ENCODE measurements at regions of chr5 and their contacts with region 1.

Region 1: GRCh38 chr5:55936100-55936693 is 58.6 kb downstream of the IL6ST start:
- DNase-seq: no peak
- ATAC-seq: peak; percentile 81
- H3K4me3 ChIP-seq: no peak overlapping the region
- H3K27ac ChIP-seq: no peak overlapping the region
- H3K4me1 ChIP-seq: no peaks in the 10 kb centered on the region
- H3K27me3 ChIP-seq: no peaks in the 10 kb centered on the region
- CTCF ChIP-seq: peak; percentile 83 to 94 (median 87)
- EP300 ChIP-seq: no peak
- POLR2A ChIP-seq: no peak
- RAD21 ChIP-seq: peak; percentile 92

Region 2: GRCh38 chr5:55885359-55885758 is 50.8 kb before region 1 on chr5:
- CTCF ChIA-PET with region 1: no interaction called
- POLR2A ChIA-PET with region 1: no interaction called
- RAD21 ChIA-PET with region 1: no interaction called
- SMC1A ChIA-PET with region 1: no interaction called
- in situ Hi-C with region 1: no loop called
- intact Hi-C with region 1: no loop called
- DNase-seq: no peak
- ATAC-seq: no peak
- H3K4me3 ChIP-seq: no peak overlapping the region
- H3K27ac ChIP-seq: no peak overlapping the region
- H3K4me1 ChIP-seq: no peaks in the 10 kb centered on the region
- H3K27me3 ChIP-seq: no peaks in the 10 kb centered on the region
- CTCF ChIP-seq: no peak
- EP300 ChIP-seq: no peak
- POLR2A ChIP-seq: no peak
- RAD21 ChIP-seq: no peak

Region 3: GRCh38 chr5:55913466-55914413 is 22.5 kb before region 1 on chr5:
- CTCF ChIA-PET with region 1: interaction called, 49 read pairs
- POLR2A ChIA-PET with region 1: no interaction called
- RAD21 ChIA-PET with region 1: interaction called, 15 read pairs
- SMC1A ChIA-PET with region 1: interaction called, 26 read pairs
- in situ Hi-C with region 1: no loop called
- intact Hi-C with region 1: no loop called
- DNase-seq: no peak
- ATAC-seq: peak; percentile 95
- H3K4me3 ChIP-seq: no peak overlapping the region
- H3K27ac ChIP-seq: no peak overlapping the region
- H3K4me1 ChIP-seq: no peaks in the 10 kb centered on the region
- H3K27me3 ChIP-seq: 0 out of 4 replicates have a peak, but pooled peaks cover 0 to 2% of the 10 kb centered on the region in 2 experiments
- CTCF ChIP-seq: no peak
- EP300 ChIP-seq: peak in 1 of 2 experiments; percentile 63; a peak in 3 of 4 replicates
- POLR2A ChIP-seq: no peak
- RAD21 ChIP-seq: no peak

Region 4: DNA sequence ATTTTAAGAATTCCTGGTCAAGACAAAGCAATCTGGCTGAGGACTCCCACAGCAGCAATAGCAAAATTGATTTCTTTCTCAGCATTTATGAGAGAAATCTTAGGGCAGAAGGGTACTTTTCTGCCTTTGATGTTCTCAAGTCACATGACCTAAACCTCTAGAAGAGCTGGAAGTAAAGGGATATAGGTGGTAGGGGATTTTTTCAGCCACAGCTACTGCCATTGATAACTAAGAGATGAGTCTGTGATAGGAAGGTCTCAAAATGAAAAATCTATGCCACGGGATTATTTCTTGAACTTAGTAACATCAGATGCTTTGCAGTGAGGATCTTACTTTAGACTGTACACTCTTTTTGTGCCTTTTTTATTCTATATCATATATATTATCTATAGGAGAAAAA is 23.0 kb after region 1 on chr5:
- CTCF ChIA-PET with region 1: interaction called, 30 read pairs
- POLR2A ChIA-PET with region 1: interaction called, 3 read pairs
- RAD21 ChIA-PET with region 1: interaction called, 6 read pairs
- SMC1A ChIA-PET with region 1: interaction called, 16 read pairs
- in situ Hi-C with region 1: no loop called
- intact Hi-C with region 1: no loop called
- DNase-seq: no peak
- ATAC-seq: peak; percentile 26
- H3K4me3 ChIP-seq: no peak overlapping the region
- H3K27ac ChIP-seq: no peak overlapping the region
- H3K4me1 ChIP-seq: no peaks in the 10 kb centered on the region
- H3K27me3 ChIP-seq: no peaks in the 10 kb centered on the region
- CTCF ChIP-seq: no peak
- EP300 ChIP-seq: no peak
- POLR2A ChIP-seq: no peak
- RAD21 ChIP-seq: no peak

Region 5: GRCh38 chr5:55982957-55983381 is 46.8 kb after region 1 on chr5:
- CTCF ChIA-PET with region 1: interaction called, 19 read pairs
- POLR2A ChIA-PET with region 1: interaction called, 3 read pairs
- RAD21 ChIA-PET with region 1: interaction called, 15 read pairs
- SMC1A ChIA-PET with region 1: interaction called, 15 read pairs
- in situ Hi-C with region 1: no loop called
- intact Hi-C with region 1: no loop called
- DNase-seq: no peak
- ATAC-seq: peak; percentile 28
- H3K4me3 ChIP-seq: no peak overlapping the region
- H3K27ac ChIP-seq: no peak overlapping the region
- H3K4me1 ChIP-seq: peaks cover 1% of the 10 kb centered on the region
- H3K27me3 ChIP-seq: no peaks in the 10 kb centered on the region
- CTCF ChIP-seq: peak in 2 of 3 experiments; percentile 14 to 50; a peak in 3 of 6 replicates
- EP300 ChIP-seq: no peak
- POLR2A ChIP-seq: no peak
- RAD21 ChIP-seq: peak; percentile 38

Region 6: GRCh38 chr5:56080375-56081052 is 144.3 kb after region 1 on chr5:
- CTCF ChIA-PET with region 1: interaction called, 11 read pairs
- POLR2A ChIA-PET with region 1: no interaction called
- RAD21 ChIA-PET with region 1: interaction called, 8 read pairs
- SMC1A ChIA-PET with region 1: interaction called, 6 read pairs
- in situ Hi-C with region 1: no loop called
- intact Hi-C with region 1: no loop called
- DNase-seq: peak; percentile 98
- ATAC-seq: peak; percentile 82
- H3K4me3 ChIP-seq: no peak overlapping the region
- H3K27ac ChIP-seq: peak overlapping the region; percentile 84
- H3K4me1 ChIP-seq: peaks cover 21% of the 10 kb centered on the region
- H3K27me3 ChIP-seq: no peaks in the 10 kb centered on the region
- CTCF ChIP-seq: no peak
- EP300 ChIP-seq: peak; percentile 83 to 87
- POLR2A ChIP-seq: no peak
- RAD21 ChIP-seq: no peak

Region 7: DNA sequence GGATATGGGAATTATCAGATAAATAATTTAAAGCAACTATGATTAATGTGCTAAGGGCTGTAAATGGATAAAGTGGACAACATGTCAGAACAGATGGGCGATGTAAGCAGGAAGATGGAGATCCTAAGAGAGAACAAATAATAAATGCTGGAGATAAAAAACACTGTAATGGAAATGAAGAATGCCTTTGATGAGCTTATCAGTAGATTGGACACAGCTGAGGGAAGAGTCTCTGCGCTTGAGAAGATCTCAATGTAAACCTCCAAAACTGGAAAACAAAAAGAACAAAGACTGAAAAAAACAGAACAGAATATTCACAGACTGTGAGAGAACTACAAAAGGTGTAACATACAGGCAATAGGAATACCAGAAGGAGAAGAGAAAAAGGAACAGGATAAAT is 194.5 kb after region 1 on chr5:
- CTCF ChIA-PET with region 1: no interaction called
- POLR2A ChIA-PET with region 1: interaction called, 10 read pairs
- RAD21 ChIA-PET with region 1: no interaction called
- SMC1A ChIA-PET with region 1: no interaction called
- in situ Hi-C with region 1: no loop called
- intact Hi-C with region 1: no loop called
- DNase-seq: no peak
- ATAC-seq: no peak
- H3K4me3 ChIP-seq: no peak overlapping the region
- H3K27ac ChIP-seq: no peak overlapping the region
- H3K4me1 ChIP-seq: no peaks in the 10 kb centered on the region
- H3K27me3 ChIP-seq: no peaks in the 10 kb centered on the region
- CTCF ChIP-seq: no peak
- EP300 ChIP-seq: no peak
- POLR2A ChIP-seq: no peak
- RAD21 ChIP-seq: no peak

Region 8: DNA sequence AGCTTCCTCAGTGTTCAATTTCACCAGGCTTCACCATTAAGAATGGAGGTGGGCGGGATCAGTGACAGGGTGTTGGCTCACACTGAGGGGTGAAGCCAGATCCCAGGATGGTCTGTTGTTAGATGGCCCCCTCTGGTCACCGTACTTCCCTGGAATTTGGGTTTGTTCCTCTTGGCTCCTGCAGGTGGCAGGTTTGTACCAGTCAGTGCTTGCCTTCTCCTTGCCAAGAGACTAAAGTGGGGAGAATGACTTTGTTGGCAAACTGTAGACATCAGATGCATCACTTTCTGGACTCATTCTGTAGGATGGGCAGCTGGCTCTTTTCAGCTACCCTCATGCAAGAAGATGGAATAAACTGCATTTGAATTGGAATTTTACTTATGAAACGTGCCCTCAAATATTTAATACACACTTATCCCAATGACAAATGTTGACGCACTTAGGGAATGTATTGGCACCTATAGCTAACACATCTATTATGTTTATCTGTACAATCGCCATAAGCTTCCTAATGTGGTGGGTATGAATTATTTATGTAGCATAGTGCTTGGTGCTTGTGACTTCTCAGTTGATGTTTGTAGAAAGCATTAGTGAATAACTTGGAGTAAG is 328.3 kb after region 1 on chr5:
- CTCF ChIA-PET with region 1: interaction called, 23 read pairs
- POLR2A ChIA-PET with region 1: no interaction called
- RAD21 ChIA-PET with region 1: interaction called, 21 read pairs
- SMC1A ChIA-PET with region 1: interaction called, 14 read pairs
- in situ Hi-C with region 1: no loop called
- intact Hi-C with region 1: loop called (anchors 2 kb)
- DNase-seq: no peak
- ATAC-seq: peak; percentile 72
- H3K4me3 ChIP-seq: no peak overlapping the region
- H3K27ac ChIP-seq: no peak overlapping the region
- H3K4me1 ChIP-seq: no peaks in the 10 kb centered on the region
- H3K27me3 ChIP-seq: no peaks in the 10 kb centered on the region; a peak in 1 of 4 replicates
- CTCF ChIP-seq: peak; percentile 47 to 71 (median 66)
- EP300 ChIP-seq: no peak
- POLR2A ChIP-seq: no peak
- RAD21 ChIP-seq: peak; percentile 74